Mammary epithelial cell (primary cell): ENCODE measurements at regions of chr10 and their contacts with region 1.

Region 1: DNA sequence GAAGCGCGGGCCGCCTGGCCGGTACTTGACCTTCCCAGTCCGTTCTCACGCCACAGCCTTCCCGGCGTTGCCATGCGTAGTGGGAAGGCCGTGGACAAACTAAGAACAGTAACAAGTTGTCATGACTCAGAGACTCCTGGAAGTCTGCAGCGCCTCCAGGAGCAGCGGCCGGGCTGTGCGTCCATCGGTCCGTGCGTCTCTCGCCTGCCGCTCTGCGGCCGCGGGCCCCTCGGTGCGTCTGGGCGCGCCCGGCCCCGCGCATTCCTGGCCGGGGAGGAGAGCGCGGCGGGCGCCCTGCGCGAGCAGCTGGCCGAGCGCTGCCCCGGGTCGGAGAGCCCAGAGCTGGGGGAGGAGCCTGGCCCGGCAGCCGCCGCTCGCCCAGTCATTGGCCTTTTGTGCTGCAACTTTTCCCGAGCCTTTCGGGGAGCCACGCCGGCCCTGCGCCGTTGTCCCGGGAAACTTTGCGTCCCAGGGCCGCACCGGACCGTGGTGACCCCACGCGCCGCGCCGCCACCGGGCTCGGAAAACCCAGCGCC is 123.7 kb downstream of the TACC2 start:
- DNase-seq: peak; percentile 92
- H3K4me3 ChIP-seq: peak overlapping the region; percentile 73 to 83 (median 75)
- H3K27ac ChIP-seq: peak overlapping the region; percentile 75
- H3K4me1 ChIP-seq: peaks cover 40% of the 10 kb centered on the region
- H3K27me3 ChIP-seq: no peaks in the 10 kb centered on the region
- CTCF ChIP-seq: peak; percentile 41 to 76

Region 2: DNA sequence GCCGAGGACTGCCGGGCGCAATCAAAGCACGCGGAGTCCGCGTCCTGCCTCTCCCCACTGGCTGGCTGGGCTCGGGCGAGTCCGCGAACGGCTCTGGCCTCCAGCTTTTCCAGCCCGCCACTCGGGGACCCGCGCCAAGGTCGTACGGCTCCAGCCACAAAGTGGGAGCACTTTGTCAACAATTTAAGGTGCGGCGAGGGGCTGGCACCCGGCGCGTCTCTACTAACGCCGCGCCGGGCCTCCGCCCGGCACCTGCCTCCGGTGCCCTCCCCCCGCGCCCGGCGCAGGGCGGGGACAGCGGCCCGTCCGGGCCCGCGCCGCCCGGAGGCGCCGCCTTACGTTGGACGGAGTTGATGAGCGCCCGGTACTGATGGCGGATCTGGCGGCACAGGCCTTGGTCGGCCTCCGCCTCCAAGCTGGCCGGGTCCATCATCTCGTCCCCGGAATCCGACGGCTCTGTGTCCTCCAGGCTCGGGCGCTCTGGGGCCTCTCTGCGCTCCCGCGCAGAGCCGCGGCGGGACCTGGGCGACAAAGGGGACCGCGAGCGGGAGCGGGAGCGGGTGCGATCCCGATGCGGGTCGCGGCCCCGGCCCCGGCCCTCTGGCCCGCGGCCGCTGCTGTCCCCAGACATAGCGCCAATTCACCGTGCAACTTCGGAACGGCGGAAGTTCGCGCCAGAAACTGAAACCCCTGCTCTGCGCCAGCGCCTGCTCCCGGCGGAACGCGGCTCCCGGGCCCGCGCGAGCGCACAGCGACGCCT is 138.0 kb before region 1 on chr10 and contains the start of gene NSMCE4A:
- CTCF ChIA-PET with region 1: no interaction called
- dilution Hi-C with region 1: no loop called
- in situ Hi-C with region 1: no loop called
- intact Hi-C with region 1: loop called (anchors 1 kb)
- DNase-seq: peak; percentile 66
- H3K4me3 ChIP-seq: peak within 1 kb of the TSS; percentile 61 to 72 (median 62)
- H3K27ac ChIP-seq: peak within 1 kb of the TSS; percentile 65
- H3K4me1 ChIP-seq: peaks cover 10% of the 10 kb centered on the region
- H3K27me3 ChIP-seq: no peaks in the 10 kb centered on the region
- CTCF ChIP-seq: peak; percentile 47 to 64
- total RNA-seq, gene NSMCE4A: 14.5 to 28.6 TPM

Region 3: GRCh38 chr10:122051251-122051996 is 61.3 kb before region 1 on chr10:
- CTCF ChIA-PET with region 1: interaction called, 6 read pairs
- dilution Hi-C with region 1: loop called (anchors 5 kb)
- in situ Hi-C with region 1: no loop called
- intact Hi-C with region 1: loop called (anchors 1 kb)
- DNase-seq: peak; percentile 73
- H3K4me3 ChIP-seq: no peak overlapping the region
- H3K27ac ChIP-seq: no peak overlapping the region
- H3K4me1 ChIP-seq: peaks cover 10% of the 10 kb centered on the region
- H3K27me3 ChIP-seq: no peaks in the 10 kb centered on the region
- CTCF ChIP-seq: peak; percentile 76 to 78

Region 4: DNA sequence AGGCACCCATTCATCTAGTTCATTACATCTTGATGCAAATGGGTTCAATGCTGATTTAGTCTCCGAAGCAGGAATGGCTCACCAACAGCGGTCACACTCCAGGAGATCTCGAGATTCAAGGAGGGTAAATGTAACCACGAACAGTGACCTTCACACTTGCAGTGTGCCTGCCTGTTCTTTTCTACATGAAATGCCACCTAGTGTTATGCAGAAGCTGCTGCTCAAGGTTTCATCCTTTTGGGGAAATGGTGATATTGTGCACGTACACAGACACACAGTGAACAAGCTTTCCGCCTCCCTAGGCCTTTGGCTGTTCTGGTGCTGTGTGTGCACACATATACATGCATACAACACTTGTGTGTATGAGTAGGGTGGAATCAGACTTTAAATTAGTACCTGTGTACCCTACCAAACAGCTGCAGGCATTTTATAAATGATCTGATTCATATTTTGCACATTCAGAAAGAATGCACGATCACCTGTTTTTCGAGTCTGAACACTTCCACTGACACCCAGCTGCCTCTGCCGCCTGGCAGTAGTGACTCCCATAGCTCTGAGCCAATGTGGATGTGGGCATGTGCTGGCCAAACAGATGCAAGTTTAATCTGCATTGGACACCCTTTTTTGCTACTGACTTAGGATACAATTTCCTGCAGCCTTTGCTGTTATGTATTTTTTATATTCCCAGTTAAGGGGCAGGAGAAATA is 23.2 kb before region 1 on chr10:
- CTCF ChIA-PET with region 1: interaction called, 5 read pairs
- dilution Hi-C with region 1: no loop called
- in situ Hi-C with region 1: no loop called
- intact Hi-C with region 1: loop called (anchors 2 kb)
- DNase-seq: peak; percentile 93
- H3K4me3 ChIP-seq: no peak overlapping the region
- H3K27ac ChIP-seq: peak overlapping the region; percentile 42
- H3K4me1 ChIP-seq: peaks cover 52% of the 10 kb centered on the region
- H3K27me3 ChIP-seq: no peaks in the 10 kb centered on the region
- CTCF ChIP-seq: peak; percentile 11 to 35